Dorsolateral prefrontal cortex (tissue), 120 donors: ENCODE measurements at regions of chr18 and their contacts with region 1.

Region 1: GRCh38 chr18:62186774-62187542 is at the starts of genes PIGN and RELCH:
- DNase-seq: peak; percentile 82 to 98 (median 96)
- H3K4me3 ChIP-seq: peak within 1 kb of the TSS; percentile 67 to 100 (median 95)
- H3K27ac ChIP-seq: peak within 1 kb of the TSS in 58 of 59 donors; percentile 10 to 94 (median 84)
- H3K27me3 ChIP-seq: no peaks in the 10 kb centered on the region
- CTCF ChIP-seq: peak in 15 of 56 donors; percentile 4 to 33 (median 13)
- total RNA-seq, gene PIGN: 21.1 to 43.5 (median 31.0) TPM
- total RNA-seq, gene RELCH: 44.0 to 88.4 (median 63.7) TPM

Region 2: GRCh38 chr18:61901323-61901986 is 285.5 kb before region 1 on chr18:
- intact Hi-C with region 1: no loop called
- DNase-seq: peak in 2 of 10 donors; percentile 23 to 44
- H3K4me3 ChIP-seq: no peak overlapping the region
- H3K27ac ChIP-seq: no peak overlapping the region
- H3K27me3 ChIP-seq: peaks cover 0 to 13% (median 0%) of the 10 kb centered on the region in 45 donors
- CTCF ChIP-seq: peak; percentile 63 to 94 (median 87)

Region 3: DNA sequence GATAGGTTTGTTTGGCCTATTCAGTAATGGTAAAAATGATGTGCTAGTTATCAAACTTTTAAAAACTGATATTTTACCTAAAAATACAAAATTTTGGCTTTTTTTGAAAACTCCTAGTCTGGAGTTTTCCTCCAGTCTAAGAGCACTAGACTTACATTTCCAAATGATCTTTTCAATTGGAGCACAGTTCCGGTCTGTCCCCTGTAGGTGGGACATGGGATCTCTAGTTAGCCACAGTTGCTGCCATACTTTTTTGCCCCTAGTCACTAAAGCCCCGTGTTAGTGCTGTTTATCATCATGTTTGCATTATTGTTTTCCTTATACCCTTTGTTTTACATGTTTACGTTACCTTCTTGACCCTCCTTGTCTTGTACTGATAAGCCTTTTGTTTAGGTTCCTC is 52.5 kb after region 1 on chr18:
- intact Hi-C with region 1: no loop called
- DNase-seq: no peak
- H3K4me3 ChIP-seq: no peak overlapping the region
- H3K27ac ChIP-seq: no peak overlapping the region
- H3K27me3 ChIP-seq: no peaks in the 10 kb centered on the region
- CTCF ChIP-seq: no peak

Region 4: GRCh38 chr18:62249478-62250097 is 62.6 kb after region 1 on chr18:
- intact Hi-C with region 1: loop called (anchors 5 kb)
- DNase-seq: peak in 8 of 10 donors; percentile 50 to 83 (median 60)
- H3K4me3 ChIP-seq: no peak overlapping the region
- H3K27ac ChIP-seq: no peak overlapping the region
- H3K27me3 ChIP-seq: no peaks in the 10 kb centered on the region
- CTCF ChIP-seq: peak; percentile 64 to 95 (median 82)

Region 5: DNA sequence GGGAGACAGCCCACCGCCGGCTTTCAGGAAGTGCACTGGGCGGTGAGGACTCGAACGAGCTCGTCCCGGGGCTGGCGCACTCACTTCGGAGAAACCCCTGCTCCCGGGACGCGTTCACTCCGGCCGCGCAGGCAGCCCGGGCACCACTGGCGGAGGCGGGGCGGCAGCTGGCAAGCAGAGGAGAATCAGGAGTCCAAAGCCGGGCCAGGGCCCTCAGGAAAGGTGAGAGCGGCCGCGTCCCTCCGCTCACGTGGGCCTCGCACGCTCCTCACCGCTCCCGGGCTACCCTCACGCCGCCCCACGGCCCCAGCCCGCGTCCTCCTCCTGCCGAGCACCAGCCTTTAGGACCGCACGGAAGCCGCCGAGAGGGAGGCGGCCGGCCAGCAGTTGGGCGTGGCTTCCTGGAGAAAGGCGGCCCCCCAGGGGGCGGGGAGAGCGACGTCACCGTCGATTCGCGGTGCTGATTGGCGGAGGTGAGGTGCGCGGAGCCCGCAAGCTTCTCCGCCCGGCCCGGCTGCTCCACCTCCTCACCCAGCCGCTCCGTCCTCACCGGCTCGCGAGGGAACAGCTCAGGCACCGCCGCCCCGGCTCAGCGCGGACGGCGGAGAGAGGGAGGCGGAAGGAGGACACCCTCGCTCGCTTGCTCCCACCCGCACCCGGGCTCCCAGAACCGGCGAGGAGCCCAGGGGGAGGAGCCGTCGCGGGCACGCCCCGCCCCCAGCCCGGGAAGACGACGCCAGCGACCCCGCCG is 335.7 kb after region 1 on chr18 and contains the start of gene ZCCHC2:
- intact Hi-C with region 1: loop called (anchors 2 to 5 kb)
- DNase-seq: peak; percentile 96 to 100 (median 98)
- H3K4me3 ChIP-seq: peak within 1 kb of the TSS; percentile 70 to 98 (median 94)
- H3K27ac ChIP-seq: peak within 1 kb of the TSS; percentile 91 to 100 (median 98)
- H3K27me3 ChIP-seq: no peaks in the 10 kb centered on the region
- CTCF ChIP-seq: peak in 24 of 56 donors; percentile 0 to 53 (median 22)
- total RNA-seq, gene ZCCHC2: 26.3 to 65.9 (median 38.4) TPM

Region 6: GRCh38 chr18:63074981-63075404 is 888.0 kb after region 1 on chr18:
- intact Hi-C with region 1: loop called in 1 of 2 experiments (anchors 10 kb)
- DNase-seq: peak; percentile 31 to 88 (median 80)
- H3K4me3 ChIP-seq: peak overlapping the region; percentile 21 to 71 (median 51)
- H3K27ac ChIP-seq: peak overlapping the region in 32 of 59 donors; percentile 10 to 79 (median 56)
- H3K27me3 ChIP-seq: no peaks in the 10 kb centered on the region
- CTCF ChIP-seq: peak in 33 of 56 donors; percentile 5 to 59 (median 30)